ENCODE measurements at regions of chr5 and their contacts with region 1.

Region 1: GRCh38 chr5:88729084-88729828 is 153.7 kb downstream of the MEF2C start:
- DNase-seq: peak; percentile 23 to 61
- ATAC-seq: peak; percentile 71 to 77
- H3K4me3 ChIP-seq: no peak overlapping the region
- H3K27ac ChIP-seq: peak overlapping the region in 3 of 4 donors; percentile 62 to 76 (median 67)
- H3K4me1 ChIP-seq: peaks cover 10 to 13% of the 10 kb centered on the region in 2 donors
- H3K27me3 ChIP-seq: no peaks in the 10 kb centered on the region
- CTCF ChIP-seq: peak; percentile 68 to 83 (median 76)
- POLR2A ChIP-seq: no peak

Region 2: DNA sequence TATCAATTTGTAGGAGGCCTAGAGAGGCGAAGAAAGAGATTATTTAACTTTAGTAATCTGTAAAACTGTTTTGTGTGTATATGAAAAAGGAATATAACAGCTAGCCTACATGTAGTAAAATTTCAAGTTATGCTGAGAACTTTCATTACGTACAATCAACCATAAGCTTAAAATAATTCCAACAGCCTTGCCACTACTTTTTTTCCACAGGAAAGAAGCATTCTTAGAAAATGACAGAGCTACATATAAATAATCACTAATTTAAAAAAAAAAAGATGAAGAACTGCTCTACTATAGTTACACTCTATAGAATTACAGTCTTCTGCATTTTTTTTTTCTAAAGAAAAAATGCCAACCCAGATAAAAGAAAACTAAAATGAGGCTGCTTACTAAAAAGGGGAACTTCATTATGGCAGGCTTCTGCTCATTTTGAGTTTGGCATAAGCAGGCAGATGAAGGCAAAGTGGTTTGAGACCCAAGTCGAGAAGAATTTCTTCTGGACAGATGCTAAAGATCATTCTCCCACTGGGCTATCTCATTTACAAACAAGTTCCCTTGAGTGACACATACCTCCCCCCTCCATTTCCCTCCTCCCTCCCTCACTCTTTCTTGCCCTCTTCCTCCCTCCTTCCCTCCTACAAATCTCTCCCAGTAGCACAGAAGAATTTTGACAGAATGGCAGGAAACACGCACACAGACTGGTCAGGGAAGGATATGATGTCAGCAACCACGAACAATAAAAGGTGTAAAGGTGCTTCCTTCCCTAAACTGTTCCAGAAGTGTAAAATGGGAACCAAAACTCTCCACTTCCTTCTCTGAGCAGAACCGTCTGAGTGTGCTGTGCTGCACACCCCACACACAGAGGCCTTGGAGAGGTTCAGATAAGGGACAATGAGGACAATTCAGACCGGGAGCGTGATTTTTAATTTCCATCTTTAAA is 97.7 kb after region 1 on chr5:
- in situ Hi-C with region 1: no loop called
- intact Hi-C with region 1: no loop called
- DNase-seq: peak in 1 of 2 donors; percentile 46
- ATAC-seq: peak; percentile 43 to 45
- H3K4me3 ChIP-seq: peak overlapping the region; percentile 18 to 32 (median 25)
- H3K27ac ChIP-seq: peak overlapping the region; percentile 84 to 90 (median 87)
- H3K4me1 ChIP-seq: peaks cover 93 to 95% of the 10 kb centered on the region in 2 donors
- H3K27me3 ChIP-seq: no peaks in the 10 kb centered on the region
- CTCF ChIP-seq: no peak
- POLR2A ChIP-seq: peak; percentile 39 to 78

Region 3: GRCh38 chr5:88883059-88883835 is 154.0 kb after region 1 on chr5 and contains the start of gene MEF2C:
- in situ Hi-C with region 1: loop called in 3 of 4 experiments (anchors 10 to 25 kb)
- intact Hi-C with region 1: no loop called
- DNase-seq: peak; percentile 70 to 82
- ATAC-seq: peak; percentile 69 to 73
- H3K4me3 ChIP-seq: peak within 1 kb of the TSS; percentile 59 to 81 (median 70)
- H3K27ac ChIP-seq: peak within 1 kb of the TSS; percentile 86 to 96 (median 94)
- H3K4me1 ChIP-seq: peaks cover 46 to 50% of the 10 kb centered on the region in 2 donors
- H3K27me3 ChIP-seq: no peaks in the 10 kb centered on the region
- CTCF ChIP-seq: no peak
- POLR2A ChIP-seq: peak; percentile 83
- total RNA-seq, gene MEF2C: 63.8 to 192 (median 128) TPM

Region 4: GRCh38 chr5:88944751-88945531 is 215.7 kb after region 1 on chr5:
- in situ Hi-C with region 1: no loop called
- intact Hi-C with region 1: loop called (anchors 5 kb)
- DNase-seq: no peak
- ATAC-seq: no peak
- H3K4me3 ChIP-seq: no peak overlapping the region
- H3K27ac ChIP-seq: no peak overlapping the region
- H3K4me1 ChIP-seq: peaks cover 12 to 14% of the 10 kb centered on the region in 2 donors
- H3K27me3 ChIP-seq: no peaks in the 10 kb centered on the region
- CTCF ChIP-seq: no peak
- POLR2A ChIP-seq: no peak

Region 5: GRCh38 chr5:89282554-89283510 is 553.6 kb after region 1 on chr5:
- in situ Hi-C with region 1: no loop called
- intact Hi-C with region 1: loop called (anchors 10 kb)
- DNase-seq: no peak
- ATAC-seq: peak; percentile 88 to 90
- H3K4me3 ChIP-seq: no peak overlapping the region
- H3K27ac ChIP-seq: peak overlapping the region in 3 of 4 donors; percentile 58 to 78 (median 67)
- H3K4me1 ChIP-seq: peaks cover 29 to 34% of the 10 kb centered on the region in 2 donors
- H3K27me3 ChIP-seq: no peaks in the 10 kb centered on the region
- CTCF ChIP-seq: no peak
- POLR2A ChIP-seq: no peak

Region 6: DNA sequence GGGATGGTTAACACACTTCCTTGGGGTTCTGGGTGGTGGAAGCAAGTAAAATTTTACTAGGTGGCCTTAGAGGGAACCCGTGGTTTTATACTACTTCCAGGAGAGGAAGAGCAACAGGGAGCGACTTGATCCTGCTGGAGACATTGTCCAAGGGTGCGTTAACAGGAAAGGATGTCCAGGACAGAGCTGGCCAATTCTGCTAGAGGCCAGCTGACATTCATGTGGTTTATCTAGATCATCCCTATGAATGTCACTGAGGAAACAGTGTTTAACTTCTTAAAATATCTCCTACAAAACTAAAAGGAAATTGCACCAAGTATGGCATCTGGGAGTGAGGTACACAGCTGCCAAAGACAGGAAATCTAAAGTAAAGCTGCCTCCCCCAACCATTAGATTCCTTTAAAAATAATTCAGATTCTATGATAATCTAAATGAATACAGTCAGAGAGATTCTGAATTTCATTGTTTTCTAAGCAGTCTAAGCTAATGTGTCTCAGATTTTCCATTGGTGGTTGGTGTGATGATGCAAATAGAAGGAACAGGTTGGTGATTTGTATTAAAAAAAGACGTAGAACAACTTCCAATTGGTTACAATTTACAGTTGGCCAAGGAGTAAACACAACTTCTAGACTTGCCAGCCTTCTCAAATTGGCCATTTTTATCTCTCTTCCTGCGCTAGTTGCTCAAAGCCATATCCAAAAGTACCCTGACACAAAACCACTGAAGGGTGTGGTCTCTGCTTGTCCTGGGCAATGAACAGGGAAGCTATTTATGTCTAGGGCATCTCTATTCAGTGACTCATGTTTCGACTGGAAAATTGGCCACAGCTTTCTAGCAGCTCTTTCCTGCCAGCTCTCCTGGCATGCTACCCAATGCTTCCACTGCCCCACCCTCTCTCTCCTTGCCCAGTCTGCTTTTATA is 728.4 kb after region 1 on chr5:
- in situ Hi-C with region 1: no loop called
- intact Hi-C with region 1: loop called (anchors 10 kb)
- DNase-seq: peak; percentile 70 to 83
- ATAC-seq: peak; percentile 99
- H3K4me3 ChIP-seq: peak overlapping the region in 3 of 4 donors; percentile 14 to 21 (median 19)
- H3K27ac ChIP-seq: peak overlapping the region; percentile 85 to 92 (median 89)
- H3K4me1 ChIP-seq: peaks cover 20 to 21% of the 10 kb centered on the region in 2 donors
- H3K27me3 ChIP-seq: no peaks in the 10 kb centered on the region
- CTCF ChIP-seq: no peak
- POLR2A ChIP-seq: no peak

Region 7: DNA sequence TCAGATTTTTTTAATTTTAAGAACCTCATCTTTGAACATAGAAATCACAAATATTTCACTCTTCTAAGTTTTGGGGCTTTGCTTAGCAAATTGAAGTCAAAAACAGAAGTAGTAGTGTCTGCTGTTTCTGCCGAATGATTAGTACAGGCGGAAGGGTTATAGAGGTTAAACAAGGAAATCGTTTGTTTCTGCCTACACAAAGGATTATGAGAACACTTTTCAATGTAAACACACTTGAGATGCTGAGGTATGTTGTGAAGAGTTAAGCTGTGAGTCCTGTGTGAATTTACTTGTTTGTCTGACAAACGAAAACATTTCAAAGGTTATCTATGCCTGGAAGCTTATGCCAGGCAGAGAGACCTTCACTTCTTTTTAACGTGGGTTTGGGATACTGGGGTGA is 1455.5 kb after region 1 on chr5:
- in situ Hi-C with region 1: no loop called
- intact Hi-C with region 1: loop called (anchors 10 kb)
- DNase-seq: no peak
- ATAC-seq: no peak
- H3K4me3 ChIP-seq: no peak overlapping the region
- H3K27ac ChIP-seq: no peak overlapping the region
- H3K4me1 ChIP-seq: no peaks in the 10 kb centered on the region
- H3K27me3 ChIP-seq: no peaks in the 10 kb centered on the region
- CTCF ChIP-seq: no peak
- POLR2A ChIP-seq: no peak